Activated naive CD4-positive, alpha-beta T cell treated with anti-CD3 and anti-CD28 coated beads for 36 hours (primary cell): ENCODE measurements at regions of chr4 and their contacts with region 1.

Region 1: DNA sequence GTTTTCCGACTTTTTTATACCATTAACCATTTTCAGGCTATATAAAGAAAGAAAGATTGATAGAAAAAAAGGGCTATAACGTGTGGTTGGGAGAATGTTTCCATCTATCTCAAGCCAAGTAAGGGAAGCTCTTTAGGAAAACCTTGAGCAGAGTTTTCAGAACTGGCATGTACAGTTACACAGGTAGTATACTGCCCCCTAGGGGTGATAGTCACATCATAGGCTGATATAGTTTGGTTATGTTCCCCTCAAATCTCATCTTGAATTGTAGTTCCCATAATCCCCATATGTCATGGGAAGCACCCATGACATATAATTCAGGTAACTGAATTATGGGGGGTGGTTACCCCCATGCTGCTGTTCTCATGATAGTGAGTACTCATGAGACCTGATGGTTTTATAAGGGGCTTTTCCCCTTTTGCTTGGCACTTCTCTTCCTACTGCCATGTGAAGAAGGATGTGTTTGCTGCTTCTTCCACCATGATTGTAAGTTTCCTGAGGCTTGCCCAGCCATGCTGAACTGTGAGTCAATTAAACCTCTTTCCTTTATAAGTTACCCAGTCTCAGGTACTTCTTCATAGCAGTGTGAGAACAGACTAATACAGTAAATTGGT is 186.8 kb downstream of the TMA16 start:
- DNase-seq: peak; percentile 30
- H3K4me3 Mint-ChIP-seq: no peak overlapping the region
- H3K27ac Mint-ChIP-seq: no peak overlapping the region
- H3K4me1 Mint-ChIP-seq: no peaks in the 10 kb centered on the region
- H3K27me3 Mint-ChIP-seq: no peaks in the 10 kb centered on the region

Region 2: DNA sequence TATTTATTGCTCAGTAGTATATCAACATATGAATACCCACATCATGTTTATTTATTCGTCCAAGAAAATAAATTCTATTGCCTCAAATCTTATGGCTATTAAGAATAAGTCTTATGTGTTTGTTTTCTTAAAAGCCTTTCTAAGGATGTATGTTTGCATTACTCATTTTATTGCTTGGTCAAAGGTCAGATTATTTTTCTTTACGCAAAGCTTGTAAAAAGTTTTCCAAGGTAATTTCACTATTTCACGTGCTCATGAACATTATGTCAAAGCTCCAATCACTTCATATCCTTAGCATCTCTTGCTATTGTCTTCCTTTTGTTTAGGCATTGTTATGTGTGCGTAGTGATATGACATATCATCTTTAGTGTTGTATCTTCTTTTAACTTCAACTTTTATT is 1259.0 kb before region 1 on chr4:
- CTCF ChIA-PET with region 1: no interaction called
- intact Hi-C with region 1: no loop called
- DNase-seq: no peak
- H3K4me3 Mint-ChIP-seq: no peak overlapping the region
- H3K27ac Mint-ChIP-seq: no peak overlapping the region
- H3K4me1 Mint-ChIP-seq: no peaks in the 10 kb centered on the region
- H3K27me3 Mint-ChIP-seq: no peaks in the 10 kb centered on the region

Region 3: GRCh38 chr4:162497564-162498167 is 1183.6 kb before region 1 on chr4:
- CTCF ChIA-PET with region 1: no interaction called
- intact Hi-C with region 1: loop called (anchors 5 kb)
- DNase-seq: peak; percentile 12
- H3K4me3 Mint-ChIP-seq: no peak overlapping the region
- H3K27ac Mint-ChIP-seq: no peak overlapping the region
- H3K4me1 Mint-ChIP-seq: no peaks in the 10 kb centered on the region
- H3K27me3 Mint-ChIP-seq: peaks cover 8% of the 10 kb centered on the region

Region 4: GRCh38 chr4:163554870-163555465 is 126.3 kb before region 1 on chr4:
- CTCF ChIA-PET with region 1: interaction called, 166 read pairs
- intact Hi-C with region 1: loop called (anchors 1 kb)
- DNase-seq: no peak
- H3K4me3 Mint-ChIP-seq: no peak overlapping the region
- H3K27ac Mint-ChIP-seq: no peak overlapping the region
- H3K4me1 Mint-ChIP-seq: peaks cover 33% of the 10 kb centered on the region
- H3K27me3 Mint-ChIP-seq: no peaks in the 10 kb centered on the region

Region 5: GRCh38 chr4:164012396-164013027 is 331.2 kb after region 1 on chr4:
- CTCF ChIA-PET with region 1: interaction called, 3 read pairs
- intact Hi-C with region 1: loop called (anchors 1 kb)
- DNase-seq: peak; percentile 52
- H3K4me3 Mint-ChIP-seq: no peak overlapping the region
- H3K27ac Mint-ChIP-seq: no peak overlapping the region
- H3K4me1 Mint-ChIP-seq: peaks cover 5% of the 10 kb centered on the region
- H3K27me3 Mint-ChIP-seq: no peaks in the 10 kb centered on the region

Region 6: DNA sequence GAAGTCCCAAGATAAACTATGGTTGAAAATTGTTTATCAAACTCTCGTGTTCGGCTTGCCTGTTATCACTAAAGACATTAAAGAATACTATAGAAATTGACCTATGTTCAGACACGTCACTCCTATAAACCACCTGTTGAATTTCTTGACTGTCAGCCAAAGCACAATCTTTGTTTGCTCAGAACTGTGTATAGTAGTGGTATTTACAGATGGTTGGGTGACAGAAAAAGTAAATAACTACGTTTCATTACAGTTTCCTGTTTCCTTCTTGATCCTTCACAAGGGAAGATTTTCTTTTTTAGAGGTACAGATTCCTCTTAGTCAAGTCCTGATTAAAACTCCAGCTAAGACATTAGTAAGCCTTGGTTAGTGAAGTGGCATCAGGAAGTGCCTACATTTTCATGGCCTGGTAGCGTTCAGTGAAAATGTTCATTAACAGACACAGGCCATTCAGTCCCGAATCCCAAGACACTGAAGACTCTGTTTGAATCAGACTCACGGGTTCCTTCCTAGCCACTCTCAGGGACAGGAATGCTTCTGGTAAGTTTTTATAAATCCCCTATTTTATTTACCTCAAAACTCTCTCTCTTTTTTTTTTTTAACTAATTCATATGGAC is 1072.7 kb after region 1 on chr4 and contains the start of gene SMIM31:
- CTCF ChIA-PET with region 1: no interaction called
- intact Hi-C with region 1: loop called (anchors 5 kb)
- DNase-seq: no peak
- H3K4me3 Mint-ChIP-seq: no peak within 1 kb of the TSS
- H3K27ac Mint-ChIP-seq: no peak within 1 kb of the TSS
- H3K4me1 Mint-ChIP-seq: no peaks in the 10 kb centered on the region
- H3K27me3 Mint-ChIP-seq: peaks cover 6% of the 10 kb centered on the region
- total RNA-seq, gene SMIM31: not detected